Breast epithelium (tissue), 4 donors: ENCODE measurements at regions of chr6 and their contacts with region 1.

Region 1: GRCh38 chr6:24154121-24154520 is 28.1 kb downstream of the NRSN1 start:
- DNase-seq: no peak
- H3K4me3 ChIP-seq: no peak overlapping the region
- H3K27ac ChIP-seq: no peak overlapping the region
- H3K4me1 ChIP-seq: no peaks in the 10 kb centered on the region
- H3K27me3 ChIP-seq: no peaks in the 10 kb centered on the region
- CTCF ChIP-seq: no peak
- POLR2A ChIP-seq: no peak

Region 2: GRCh38 chr6:23587582-23587981 is 566.5 kb before region 1 on chr6:
- intact Hi-C with region 1: loop called (anchors 5 kb)
- DNase-seq: no peak
- H3K4me3 ChIP-seq: no peak overlapping the region
- H3K27ac ChIP-seq: no peak overlapping the region
- H3K4me1 ChIP-seq: no peaks in the 10 kb centered on the region
- H3K27me3 ChIP-seq: no peaks in the 10 kb centered on the region
- CTCF ChIP-seq: no peak
- POLR2A ChIP-seq: no peak

Region 3: GRCh38 chr6:24205020-24205492 is 50.9 kb after region 1 on chr6:
- intact Hi-C with region 1: no loop called
- DNase-seq: no peak
- H3K4me3 ChIP-seq: no peak overlapping the region
- H3K27ac ChIP-seq: no peak overlapping the region
- H3K4me1 ChIP-seq: no peaks in the 10 kb centered on the region
- H3K27me3 ChIP-seq: no peaks in the 10 kb centered on the region
- CTCF ChIP-seq: peak; percentile 48 to 71 (median 57)
- POLR2A ChIP-seq: no peak